Right ventricle myocardium inferior (tissue), 1 donor: ENCODE measurements at regions of chr1 and their contacts with region 1.

Region 1: DNA sequence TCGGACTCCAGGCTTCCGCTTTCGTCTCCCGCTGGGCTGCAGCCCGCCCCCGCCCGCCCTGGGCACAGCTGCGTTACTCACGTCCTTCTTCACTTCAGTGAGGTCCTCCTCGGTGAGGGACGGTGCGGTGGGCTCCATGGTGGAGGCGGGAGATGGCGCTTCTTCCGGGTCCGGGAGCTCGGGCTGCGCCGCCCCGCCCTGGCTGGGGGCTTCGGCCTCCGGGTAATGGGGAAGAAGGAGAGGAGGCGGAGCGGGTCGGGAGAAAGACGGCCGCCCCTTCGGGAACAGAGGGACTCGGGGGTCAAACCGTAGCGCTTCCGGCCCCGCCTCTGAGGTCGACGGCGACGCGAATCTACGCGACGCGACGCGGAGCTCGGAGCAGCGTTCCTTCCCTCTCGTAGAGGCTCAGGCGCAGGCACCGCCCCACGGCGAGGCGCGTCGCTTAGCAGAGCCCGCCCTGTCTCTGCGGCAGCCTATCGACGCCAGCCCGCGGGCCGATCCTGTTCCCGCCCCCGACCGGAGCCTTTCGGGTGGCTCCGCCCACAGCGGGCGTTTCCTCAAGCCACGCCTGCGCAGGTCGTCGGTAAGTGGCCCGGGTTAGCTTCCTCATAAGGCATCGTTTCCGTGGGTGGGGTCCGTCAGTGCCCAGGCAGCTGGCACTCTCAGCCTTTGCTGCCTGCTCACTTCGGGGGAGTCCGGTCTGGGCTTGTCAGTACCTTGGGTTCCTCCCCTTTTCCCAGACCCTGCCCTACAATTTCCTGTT is at the start of gene BCL10:
- DNase-seq: peak; percentile 100
- ATAC-seq: peak; percentile 100
- total RNA-seq, gene BCL10: 8.6 TPM

Region 2: GRCh38 chr1:84271441-84272151 is 1004.8 kb before region 1 on chr1:
- intact Hi-C with region 1: no loop called
- DNase-seq: no peak
- ATAC-seq: no peak

Region 3: DNA sequence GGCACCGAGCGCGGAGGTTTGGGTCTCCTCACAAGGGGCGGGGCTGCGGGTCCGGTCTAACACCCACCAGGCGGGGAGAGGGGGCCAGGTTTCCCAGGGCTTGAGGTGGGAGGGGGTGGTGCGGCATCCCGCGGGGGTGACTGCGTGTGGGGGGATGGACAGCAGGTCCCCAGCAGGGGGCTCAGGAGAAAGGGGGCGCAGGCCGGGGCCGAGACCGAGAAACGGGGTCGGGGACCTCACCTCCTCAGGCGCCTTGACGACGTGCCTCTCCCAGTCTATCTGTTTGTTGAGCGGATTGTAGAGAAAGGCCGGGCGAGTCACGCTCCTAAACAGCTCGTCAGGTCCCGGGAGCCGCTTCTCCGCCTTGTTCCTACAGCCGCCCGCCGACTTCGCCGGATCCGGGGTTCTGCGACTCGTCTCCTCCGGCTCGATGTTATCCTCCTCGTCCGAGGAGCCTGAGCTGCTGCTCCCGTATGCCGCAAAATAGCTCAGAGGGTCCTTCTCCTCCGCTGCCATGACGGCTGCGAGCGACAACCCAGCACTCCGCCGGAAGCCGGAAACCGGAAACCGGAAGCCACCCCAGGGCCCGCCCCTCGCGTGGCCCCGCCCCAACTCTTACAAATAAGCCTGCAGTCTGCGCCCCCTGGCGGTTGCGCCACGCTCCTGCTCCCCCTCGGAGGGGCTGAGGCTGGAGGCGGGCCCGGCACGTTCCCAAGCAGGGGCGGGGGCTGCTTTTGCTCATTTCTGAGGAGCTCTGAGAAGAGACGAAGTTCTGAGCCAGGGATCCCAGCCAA is 17.1 kb before region 1 on chr1 and contains the start of gene C1orf52:
- intact Hi-C with region 1: loop called (anchors 1 kb)
- DNase-seq: peak; percentile 98
- ATAC-seq: peak; percentile 98
- total RNA-seq, gene C1orf52: 17.1 TPM